ENCODE measurements at regions of chr11 and their contacts with region 1.

Region 1: DNA sequence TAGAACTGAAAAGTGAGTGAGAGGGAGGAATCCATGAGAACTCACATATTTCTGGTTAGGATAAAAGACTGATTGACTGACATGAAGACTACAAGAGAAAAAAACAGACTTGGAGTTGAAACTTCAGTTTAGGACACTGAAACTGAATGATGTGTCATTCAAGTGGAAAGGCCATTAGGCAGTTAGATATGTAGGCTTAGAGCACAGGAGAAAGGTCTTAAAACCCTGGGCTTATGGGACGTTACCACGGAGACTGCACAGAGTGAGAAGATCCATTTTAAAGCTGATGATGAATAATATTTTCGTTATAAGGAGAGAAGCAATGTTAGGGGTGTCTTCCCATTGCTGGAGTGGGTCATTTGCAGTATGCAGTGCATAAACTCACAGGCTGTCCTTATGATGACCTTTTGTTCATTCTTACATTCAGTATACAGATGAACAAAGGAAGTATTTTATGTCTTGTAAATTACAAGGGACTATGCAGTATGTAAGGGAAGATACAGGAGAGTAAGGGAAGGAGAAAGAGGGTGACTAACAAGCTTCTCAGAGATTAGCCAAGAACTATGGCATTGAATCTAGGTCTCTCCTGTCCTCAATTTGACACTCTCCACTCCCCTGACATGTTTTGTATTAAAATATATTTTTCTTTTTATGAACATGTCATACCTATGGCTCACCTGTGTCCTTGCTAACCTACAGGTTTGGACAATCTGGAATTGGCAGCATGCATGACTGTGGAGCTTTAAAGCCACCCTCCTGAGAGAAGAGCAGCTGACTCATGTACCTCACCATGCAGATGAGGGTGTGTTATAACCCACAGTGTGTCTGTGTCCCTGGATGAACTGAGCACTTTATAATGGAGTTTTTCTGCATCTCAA is 63.7 kb downstream of the MAML2 start:
- DNase-seq: no peak
- ATAC-seq: peak; percentile 54
- H3K4me3 ChIP-seq: no peak overlapping the region
- H3K4me3 Mint-ChIP-seq: peak overlapping the region in 9 of 10 donors; percentile 31 to 71 (median 51)
- H3K27ac ChIP-seq: peak overlapping the region; percentile 50
- H3K27ac Mint-ChIP-seq: peak overlapping the region in 8 of 9 donors; percentile 37 to 86 (median 79)
- H3K4me1 ChIP-seq: peaks cover 0 to 61% of the 10 kb centered on the region in 2 donors
- H3K4me1 Mint-ChIP-seq: peaks cover 33 to 87% (median 81%) of the 10 kb centered on the region in 7 donors
- H3K27me3 ChIP-seq: no peaks in the 10 kb centered on the region
- H3K27me3 Mint-ChIP-seq: no peaks in the 10 kb centered on the region

Region 2: DNA sequence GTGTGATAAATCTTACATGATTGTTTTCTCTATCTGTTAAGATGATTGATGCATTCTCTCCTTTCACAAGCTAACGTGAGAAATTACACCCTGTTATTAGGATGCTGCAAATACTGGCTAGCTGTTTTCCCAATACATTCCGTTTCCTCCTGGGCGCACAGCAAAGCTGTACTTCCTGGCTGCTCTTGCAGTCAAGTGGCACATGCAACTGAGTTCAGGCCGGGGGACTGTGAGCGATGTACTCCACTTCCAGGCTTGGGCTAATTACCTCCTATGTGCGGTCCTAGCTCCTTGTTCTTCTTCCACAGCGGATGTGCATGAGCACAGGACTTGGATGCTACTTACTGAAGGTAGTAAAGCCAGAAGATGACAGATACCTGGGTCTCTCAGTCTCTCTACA is 813.4 kb before region 1 on chr11:
- CTCF ChIA-PET with region 1: no interaction called
- POLR2A ChIA-PET with region 1: no interaction called
- intact Hi-C with region 1: no loop called
- DNase-seq: no peak
- ATAC-seq: no peak
- H3K4me3 ChIP-seq: no peak overlapping the region
- H3K4me3 Mint-ChIP-seq: no peak overlapping the region
- H3K27ac ChIP-seq: no peak overlapping the region
- H3K27ac Mint-ChIP-seq: peak overlapping the region in 2 of 9 donors; percentile 19 to 23
- H3K4me1 ChIP-seq: no peaks in the 10 kb centered on the region
- H3K4me1 Mint-ChIP-seq: peaks cover 0 to 10% (median 0%) of the 10 kb centered on the region in 7 donors
- H3K27me3 ChIP-seq: no peaks in the 10 kb centered on the region
- H3K27me3 Mint-ChIP-seq: no peaks in the 10 kb centered on the region

Region 3: DNA sequence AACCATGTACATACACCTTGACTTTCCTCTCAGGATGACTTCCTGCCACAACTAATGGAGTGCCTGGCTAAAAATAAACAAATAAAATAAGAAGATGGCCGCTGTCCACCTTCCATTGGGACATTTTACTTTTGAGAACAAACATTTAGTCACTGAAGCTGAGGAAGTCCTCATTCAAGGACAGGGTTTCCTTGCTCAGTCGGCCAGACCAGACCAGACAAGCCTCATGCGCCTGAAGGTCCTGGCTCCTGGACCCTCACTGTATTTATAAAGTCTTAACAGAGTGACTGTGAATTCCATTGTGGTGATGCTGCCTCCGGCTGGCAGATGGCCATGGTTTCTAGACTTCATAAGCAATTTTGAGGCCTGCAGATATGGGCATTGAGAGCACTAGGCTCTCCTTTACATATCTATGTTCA is 50.8 kb before region 1 on chr11:
- CTCF ChIA-PET with region 1: no interaction called
- POLR2A ChIA-PET with region 1: no interaction called
- intact Hi-C with region 1: no loop called
- DNase-seq: no peak
- ATAC-seq: no peak
- H3K4me3 ChIP-seq: no peak overlapping the region
- H3K4me3 Mint-ChIP-seq: peak overlapping the region in 7 of 10 donors; percentile 13 to 83 (median 57)
- H3K27ac ChIP-seq: peak overlapping the region; percentile 43
- H3K27ac Mint-ChIP-seq: peak overlapping the region in 7 of 9 donors; percentile 63 to 92 (median 87)
- H3K4me1 ChIP-seq: peaks cover 0 to 42% of the 10 kb centered on the region in 2 donors
- H3K4me1 Mint-ChIP-seq: peaks cover 43 to 96% (median 85%) of the 10 kb centered on the region in 7 donors
- H3K27me3 ChIP-seq: no peaks in the 10 kb centered on the region
- H3K27me3 Mint-ChIP-seq: no peaks in the 10 kb centered on the region

Region 4: DNA sequence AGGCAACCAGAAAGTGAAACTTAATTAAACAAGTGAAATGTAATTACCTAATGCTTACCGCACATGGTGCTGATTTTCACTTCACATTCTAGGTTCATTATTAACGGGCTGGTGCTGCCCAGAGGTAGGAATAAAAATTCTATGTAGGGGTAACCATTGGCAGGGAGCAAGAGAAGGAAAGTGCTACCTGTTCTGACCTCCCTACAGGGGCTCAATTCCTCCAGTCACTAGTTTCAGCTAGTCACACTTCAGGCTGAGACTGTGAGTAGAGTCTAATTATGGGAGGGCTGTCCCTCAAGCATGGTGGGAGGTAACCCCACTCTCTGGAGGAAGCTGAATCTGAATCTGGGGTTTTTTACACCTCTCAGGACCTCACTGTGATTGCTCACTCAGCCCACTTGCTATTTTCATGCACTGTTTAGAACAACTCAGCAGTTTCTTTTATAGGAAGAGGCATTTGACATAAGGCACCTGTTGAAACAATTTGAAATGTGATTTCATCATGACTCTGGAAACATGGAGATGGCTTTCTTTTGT is 11.7 kb before region 1 on chr11:
- CTCF ChIA-PET with region 1: interaction called, 3 read pairs
- POLR2A ChIA-PET with region 1: interaction called, 8 read pairs
- intact Hi-C with region 1: loop called in 1 of 2 experiments (anchors 1 kb)
- DNase-seq: peak in 3 of 9 donors; percentile 23 to 60 (median 47)
- ATAC-seq: peak; percentile 91
- H3K4me3 ChIP-seq: peak overlapping the region; percentile 21
- H3K4me3 Mint-ChIP-seq: peak overlapping the region; percentile 54 to 84 (median 77)
- H3K27ac ChIP-seq: peak overlapping the region; percentile 73
- H3K27ac Mint-ChIP-seq: peak overlapping the region; percentile 85 to 100 (median 94)
- H3K4me1 ChIP-seq: peaks cover 26 to 51% of the 10 kb centered on the region in 2 donors
- H3K4me1 Mint-ChIP-seq: peaks cover 43 to 96% (median 92%) of the 10 kb centered on the region in 7 donors
- H3K27me3 ChIP-seq: no peaks in the 10 kb centered on the region
- H3K27me3 Mint-ChIP-seq: no peaks in the 10 kb centered on the region

Region 5: GRCh38 chr11:96293598-96294021 is 14.4 kb after region 1 on chr11:
- CTCF ChIA-PET with region 1: interaction called, 3 read pairs
- POLR2A ChIA-PET with region 1: interaction called, 8 read pairs
- intact Hi-C with region 1: loop called in 1 of 2 experiments (anchors 1 kb)
- DNase-seq: peak in 1 of 9 donors; percentile 4
- ATAC-seq: peak; percentile 66
- H3K4me3 ChIP-seq: no peak overlapping the region
- H3K4me3 Mint-ChIP-seq: peak overlapping the region in 9 of 10 donors; percentile 45 to 87 (median 65)
- H3K27ac ChIP-seq: no peak overlapping the region
- H3K27ac Mint-ChIP-seq: peak overlapping the region in 8 of 9 donors; percentile 16 to 93 (median 43)
- H3K4me1 ChIP-seq: peaks cover 8 to 39% of the 10 kb centered on the region in 2 donors
- H3K4me1 Mint-ChIP-seq: peaks cover 50 to 96% (median 89%) of the 10 kb centered on the region in 7 donors
- H3K27me3 ChIP-seq: no peaks in the 10 kb centered on the region
- H3K27me3 Mint-ChIP-seq: no peaks in the 10 kb centered on the region